PC-9 (cell line): ENCODE measurements at regions of chr6 and their contacts with region 1.

Region 1: DNA sequence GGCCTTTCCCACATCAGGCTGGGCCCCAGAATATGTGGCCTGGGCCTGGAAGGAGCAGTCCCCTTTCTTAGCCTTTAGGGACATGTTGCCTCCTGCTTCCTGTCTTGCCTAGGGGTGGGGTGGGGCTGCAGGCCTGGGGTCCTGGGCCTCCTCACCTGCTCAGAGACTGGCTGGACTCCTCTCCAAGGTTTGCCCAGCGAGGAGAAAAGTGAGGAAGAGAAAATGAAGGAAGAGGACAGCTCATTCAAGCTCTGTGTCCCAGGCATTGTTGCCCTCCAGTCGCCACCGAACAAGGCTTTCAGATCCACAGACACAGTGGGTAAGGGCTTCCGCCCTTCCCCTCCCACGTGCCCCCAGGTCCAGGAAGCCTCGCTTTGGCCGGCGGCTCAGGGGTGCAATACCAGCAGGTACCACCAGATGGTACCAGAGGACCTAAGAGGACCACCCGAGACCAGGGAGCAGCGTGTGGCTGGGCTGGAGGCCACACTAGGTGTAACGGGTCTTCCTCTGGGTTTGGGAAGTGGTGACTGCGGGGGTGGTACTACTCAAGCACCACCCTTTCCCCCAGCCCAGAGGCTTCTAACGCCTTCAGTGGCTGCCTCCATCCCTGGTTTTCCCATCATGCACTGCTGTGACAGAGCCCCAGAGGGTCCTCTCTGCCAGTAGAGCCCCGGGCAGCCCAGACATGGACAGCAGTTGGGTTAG is 5.5 kb upstream of the BAK1 start:
- DNase-seq: peak; percentile 54 to 80
- H3K4me3 ChIP-seq: no peak overlapping the region
- H3K27ac ChIP-seq: no peak overlapping the region
- H3K4me1 ChIP-seq: peaks cover 19% of the 10 kb centered on the region
- H3K27me3 ChIP-seq: no peaks in the 10 kb centered on the region
- CTCF ChIP-seq: peak; percentile 95

Region 2: GRCh38 chr6:33248925-33249731 is 336.4 kb before region 1 on chr6:
- CTCF ChIA-PET with region 1: no interaction called
- POLR2A ChIA-PET with region 1: no interaction called
- intact Hi-C with region 1: no loop called
- DNase-seq: peak; percentile 95 to 97
- H3K4me3 ChIP-seq: peak overlapping the region; percentile 69
- H3K27ac ChIP-seq: peak overlapping the region; percentile 66
- H3K4me1 ChIP-seq: peaks cover 28% of the 10 kb centered on the region
- H3K27me3 ChIP-seq: peaks cover 16% of the 10 kb centered on the region
- CTCF ChIP-seq: no peak

Region 3: DNA sequence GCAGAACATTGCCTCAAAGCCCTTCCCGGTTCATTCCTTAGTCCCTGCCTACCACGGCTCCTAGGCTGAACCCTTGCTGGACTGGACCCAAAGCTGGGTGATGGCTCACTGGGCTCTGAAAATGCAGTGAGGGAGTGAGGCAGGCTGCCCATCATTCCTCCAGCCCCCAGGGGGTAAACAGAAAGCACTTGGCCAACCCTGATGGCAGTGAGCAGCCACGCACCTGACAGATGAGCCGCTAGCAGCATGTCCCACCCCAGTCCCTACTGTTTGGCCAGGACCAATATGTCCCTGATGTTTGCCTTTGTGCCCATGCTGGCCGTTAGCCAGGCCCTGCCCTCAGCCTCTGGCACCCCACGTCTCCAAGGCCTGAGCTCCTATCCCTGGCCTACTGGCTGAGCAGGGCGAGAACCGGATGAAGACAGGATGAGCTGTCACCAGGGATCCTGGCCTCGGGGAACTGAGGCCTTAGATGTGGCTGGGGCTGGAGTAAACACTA is 13.9 kb after region 1 on chr6:
- CTCF ChIA-PET with region 1: no interaction called
- POLR2A ChIA-PET with region 1: no interaction called
- intact Hi-C with region 1: loop called (anchors 1 kb)
- DNase-seq: peak; percentile 74 to 90
- H3K4me3 ChIP-seq: no peak overlapping the region
- H3K27ac ChIP-seq: peak overlapping the region; percentile 53
- H3K4me1 ChIP-seq: peaks cover 56% of the 10 kb centered on the region
- H3K27me3 ChIP-seq: no peaks in the 10 kb centered on the region
- CTCF ChIP-seq: no peak

Region 4: DNA sequence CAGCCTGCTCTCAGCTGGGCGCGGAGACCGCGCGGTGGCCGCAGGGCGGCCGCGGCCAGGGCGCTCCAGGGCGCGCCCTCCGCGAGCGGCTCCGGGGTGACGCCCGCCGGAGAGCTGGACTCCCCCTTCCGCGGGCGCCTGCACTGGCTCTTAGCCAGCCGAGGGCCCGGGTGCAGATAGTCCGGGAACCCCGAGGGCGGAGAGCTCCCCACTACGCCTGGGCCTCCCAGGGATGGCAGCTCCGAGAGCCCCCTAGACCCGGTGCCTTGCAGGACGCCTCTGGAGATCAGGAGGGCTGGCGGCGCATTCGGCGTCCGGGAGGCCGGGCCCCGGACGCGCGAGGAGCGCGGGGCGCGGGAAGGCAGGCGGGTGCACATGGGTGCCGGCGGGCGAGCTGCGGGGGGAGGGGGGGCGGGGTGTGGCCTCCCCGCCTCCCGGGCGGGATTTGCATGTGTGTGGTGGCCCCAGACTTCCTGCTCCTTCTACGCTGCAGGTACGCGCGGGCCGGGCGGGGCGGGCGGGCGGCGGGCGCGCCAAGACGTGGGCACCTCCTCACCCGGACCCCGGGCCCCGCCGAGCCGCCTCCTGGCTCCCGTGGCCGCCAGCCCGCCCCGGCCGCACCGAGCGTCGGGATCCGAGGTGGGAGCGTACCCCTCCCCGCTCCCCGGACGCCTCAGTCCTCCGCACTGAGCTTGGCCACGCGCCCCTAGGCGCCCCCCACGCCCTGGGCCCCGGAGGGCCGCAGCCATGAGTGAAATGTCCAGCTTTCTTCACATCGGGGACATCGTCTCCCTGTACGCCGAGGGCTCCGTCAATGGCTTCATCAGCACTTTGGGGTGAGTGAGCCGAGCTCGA is 35.5 kb after region 1 on chr6 and contains the start of gene ITPR3:
- CTCF ChIA-PET with region 1: interaction called, 3 read pairs
- POLR2A ChIA-PET with region 1: interaction called, 4 read pairs
- intact Hi-C with region 1: loop called (anchors 1 kb)
- DNase-seq: peak; percentile 69 to 74
- H3K4me3 ChIP-seq: peak within 1 kb of the TSS; percentile 100
- H3K27ac ChIP-seq: peak within 1 kb of the TSS; percentile 78
- H3K4me1 ChIP-seq: peaks cover 50% of the 10 kb centered on the region
- H3K27me3 ChIP-seq: no peaks in the 10 kb centered on the region
- CTCF ChIP-seq: no peak
- total RNA-seq, gene ITPR3: 78.3 and 86.9 TPM in 2 replicates

Region 5: DNA sequence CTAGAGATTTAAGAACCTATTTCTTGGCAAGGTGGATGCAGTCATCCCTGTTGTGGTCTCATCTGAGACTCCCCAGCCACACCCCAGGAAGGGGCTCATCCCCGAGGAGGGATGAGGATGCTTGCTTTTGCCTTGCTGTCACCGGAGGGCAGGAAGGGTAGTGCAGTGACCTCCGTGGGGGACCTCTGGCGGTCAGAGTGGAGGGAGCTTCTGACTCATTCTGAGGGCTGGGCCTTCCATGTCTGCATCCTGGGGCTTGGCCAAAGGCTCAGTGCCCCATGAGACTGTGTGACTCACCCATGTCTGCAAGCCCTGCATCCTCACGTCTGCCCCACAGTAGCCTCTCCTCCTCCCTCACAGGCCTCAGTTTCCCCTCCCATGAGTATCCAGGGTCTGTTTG is 87.3 kb after region 1 on chr6:
- CTCF ChIA-PET with region 1: interaction called, 3 read pairs
- POLR2A ChIA-PET with region 1: no interaction called
- intact Hi-C with region 1: loop called (anchors 1 kb)
- DNase-seq: peak; percentile 86 to 89
- H3K4me3 ChIP-seq: no peak overlapping the region
- H3K27ac ChIP-seq: no peak overlapping the region
- H3K4me1 ChIP-seq: peaks cover 15% of the 10 kb centered on the region
- H3K27me3 ChIP-seq: no peaks in the 10 kb centered on the region
- CTCF ChIP-seq: peak; percentile 64

Region 6: GRCh38 chr6:33700391-33701050 is 115.0 kb after region 1 on chr6:
- CTCF ChIA-PET with region 1: interaction called, 12 read pairs
- POLR2A ChIA-PET with region 1: no interaction called
- intact Hi-C with region 1: loop called (anchors 1 kb)
- DNase-seq: peak; percentile 49 to 69
- H3K4me3 ChIP-seq: no peak overlapping the region
- H3K27ac ChIP-seq: no peak overlapping the region
- H3K4me1 ChIP-seq: no peaks in the 10 kb centered on the region
- H3K27me3 ChIP-seq: no peaks in the 10 kb centered on the region
- CTCF ChIP-seq: peak; percentile 83

Region 7: GRCh38 chr6:33761922-33762629 is 176.5 kb after region 1 on chr6:
- CTCF ChIA-PET with region 1: no interaction called
- POLR2A ChIA-PET with region 1: no interaction called
- intact Hi-C with region 1: loop called (anchors 1 kb)
- DNase-seq: peak; percentile 50 to 77
- H3K4me3 ChIP-seq: no peak overlapping the region
- H3K27ac ChIP-seq: no peak overlapping the region
- H3K4me1 ChIP-seq: peaks cover 14% of the 10 kb centered on the region
- H3K27me3 ChIP-seq: no peaks in the 10 kb centered on the region
- CTCF ChIP-seq: peak; percentile 85